Mammary epithelial cell (primary cell): ENCODE measurements at regions of chr3 and their contacts with region 1.

Region 1: DNA sequence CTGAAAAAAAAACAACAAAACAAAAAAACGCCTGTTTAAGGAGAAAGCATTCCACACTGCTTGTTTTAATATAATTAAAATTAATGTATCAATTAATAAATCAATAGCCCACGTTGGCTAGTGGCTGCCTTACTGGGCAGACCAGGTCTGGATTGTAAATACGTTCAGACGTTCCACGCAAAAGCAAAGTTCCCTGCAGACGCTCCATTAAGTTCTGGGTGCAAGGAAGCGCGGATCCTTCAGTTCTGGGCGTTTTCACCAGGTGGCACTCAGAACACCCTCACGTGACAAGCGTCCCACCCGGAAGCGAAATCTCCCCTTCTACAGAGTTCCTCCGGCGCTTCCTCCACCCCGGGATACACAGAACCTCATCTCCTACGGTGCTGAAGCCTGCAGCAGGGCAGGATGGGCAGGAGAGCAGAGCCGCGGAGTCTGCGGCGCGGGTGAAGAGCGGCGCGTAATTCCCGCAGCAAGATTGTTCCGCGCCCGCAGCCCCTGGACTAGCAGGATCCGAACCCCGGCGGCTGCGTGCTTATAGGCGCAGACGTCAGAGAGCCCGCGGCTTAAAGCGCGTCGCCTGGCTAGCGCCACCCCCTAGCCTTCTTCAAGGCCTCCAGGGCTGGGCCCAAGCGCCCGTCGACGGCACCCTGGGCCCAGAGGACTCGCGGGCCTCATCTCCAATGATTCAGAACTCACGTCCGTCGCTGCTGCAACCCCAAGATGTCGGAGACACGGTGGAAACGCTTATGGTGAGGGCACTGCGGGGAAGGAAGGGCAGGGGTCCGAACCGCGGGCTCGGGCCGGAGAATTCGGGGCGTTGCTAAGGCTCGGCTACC is at the start of gene SLC25A38:
- DNase-seq: peak; percentile 83
- H3K4me3 ChIP-seq: peak within 1 kb of the TSS; percentile 84 to 96 (median 87)
- H3K27ac ChIP-seq: peak within 1 kb of the TSS; percentile 88
- H3K4me1 ChIP-seq: peaks cover 13% of the 10 kb centered on the region
- H3K27me3 ChIP-seq: no peaks in the 10 kb centered on the region
- CTCF ChIP-seq: peak in 1 of 2 donors; percentile 39
- total RNA-seq, gene SLC25A38: 27.5 to 34.9 TPM

Region 2: GRCh38 chr3:39107388-39108199 is 275.7 kb before region 1 on chr3 and contains the starts of genes GORASP1 and TTC21A:
- CTCF ChIA-PET with region 1: interaction called, 3 read pairs
- dilution Hi-C with region 1: no loop called
- in situ Hi-C with region 1: no loop called
- intact Hi-C with region 1: loop called (anchors 5 kb)
- DNase-seq: peak; percentile 81
- H3K4me3 ChIP-seq: peak within 1 kb of the TSS; percentile 72 to 95 (median 91)
- H3K27ac ChIP-seq: peak within 1 kb of the TSS; percentile 86
- H3K4me1 ChIP-seq: peaks cover 27% of the 10 kb centered on the region
- H3K27me3 ChIP-seq: no peaks in the 10 kb centered on the region
- CTCF ChIP-seq: no peak
- total RNA-seq, gene GORASP1: 47.0 to 51.3 TPM
- total RNA-seq, gene TTC21A: 5.2 to 5.7 TPM

Region 3: DNA sequence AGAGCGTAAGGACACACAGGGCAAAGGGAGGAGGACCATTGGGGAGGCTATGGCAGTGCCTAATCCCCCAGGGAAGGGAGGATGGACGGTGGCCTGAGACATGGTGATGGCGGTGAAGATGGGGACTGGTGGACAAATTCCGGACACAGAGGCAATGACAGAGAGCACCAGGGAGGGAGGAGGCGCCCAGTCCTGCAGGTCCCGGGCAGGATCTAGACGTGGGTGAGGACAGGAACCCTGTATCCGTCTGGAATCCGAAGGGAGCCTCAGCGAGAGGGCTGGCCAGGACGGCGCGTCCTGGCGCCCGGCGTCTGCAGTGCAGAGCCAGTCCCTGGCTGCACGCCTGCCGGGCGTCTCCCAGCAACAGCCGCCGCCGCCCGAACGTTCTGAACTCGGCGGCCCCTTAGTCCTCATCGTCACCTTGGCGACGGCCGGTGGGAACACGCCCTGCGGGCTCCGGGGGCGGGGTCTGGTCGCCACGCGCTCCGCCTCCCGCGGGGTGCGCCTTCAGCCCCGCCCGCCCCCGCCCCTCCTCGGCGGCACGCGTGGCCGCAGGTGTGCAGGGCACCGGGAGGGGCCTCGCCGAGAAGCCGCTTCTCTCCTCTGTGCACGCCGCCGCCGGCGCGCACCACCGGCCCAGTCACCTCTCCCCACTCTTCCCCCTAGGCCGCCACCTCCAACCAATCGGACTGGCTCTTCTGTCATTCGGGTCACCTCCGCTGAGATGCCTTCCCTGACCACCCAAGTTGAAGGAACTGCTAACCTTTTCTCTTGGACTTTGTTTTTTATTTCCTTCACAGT is 202.5 kb before region 1 on chr3:
- CTCF ChIA-PET with region 1: no interaction called
- dilution Hi-C with region 1: no loop called
- in situ Hi-C with region 1: loop called in 1 of 2 experiments (anchors 25 kb)
- intact Hi-C with region 1: no loop called
- DNase-seq: peak; percentile 86
- H3K4me3 ChIP-seq: peak overlapping the region; percentile 6 to 36 (median 22)
- H3K27ac ChIP-seq: peak overlapping the region; percentile 58
- H3K4me1 ChIP-seq: peaks cover 36% of the 10 kb centered on the region
- H3K27me3 ChIP-seq: no peaks in the 10 kb centered on the region
- CTCF ChIP-seq: peak in 1 of 2 donors; percentile 37

Region 4: DNA sequence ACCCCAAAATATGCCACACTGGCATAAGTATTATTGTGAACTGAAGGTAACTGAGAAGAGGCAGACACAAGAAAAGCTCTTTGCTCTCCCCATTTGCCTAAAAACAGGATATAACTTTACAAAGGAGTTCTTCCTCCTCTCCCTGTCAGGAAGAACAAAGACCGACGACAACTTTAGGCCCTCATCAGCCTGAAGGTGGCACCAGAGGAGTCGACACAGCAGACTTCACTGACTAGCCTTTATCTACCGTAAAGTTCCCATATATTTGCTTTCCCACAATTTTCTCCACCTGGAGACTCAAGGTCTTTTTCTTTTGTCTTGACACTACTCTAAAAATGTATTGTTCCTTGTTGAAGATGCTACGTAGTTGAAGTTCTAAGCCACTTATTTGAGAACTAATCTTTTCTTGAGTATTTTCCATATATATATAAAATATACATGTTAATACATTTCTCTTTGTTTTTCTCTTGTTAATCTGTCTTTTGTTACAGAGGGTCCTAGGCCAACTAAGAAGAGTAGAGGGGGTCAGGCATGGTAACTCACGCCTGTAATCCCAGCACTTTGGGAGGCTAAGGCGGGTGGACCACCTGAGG is 174.7 kb before region 1 on chr3:
- CTCF ChIA-PET with region 1: no interaction called
- dilution Hi-C with region 1: no loop called
- in situ Hi-C with region 1: no loop called
- intact Hi-C with region 1: loop called (anchors 5 kb)
- DNase-seq: peak; percentile 50
- H3K4me3 ChIP-seq: no peak overlapping the region
- H3K27ac ChIP-seq: no peak overlapping the region
- H3K4me1 ChIP-seq: no peaks in the 10 kb centered on the region
- H3K27me3 ChIP-seq: peaks cover 3% of the 10 kb centered on the region
- CTCF ChIP-seq: peak; percentile 65 to 81

Region 5: DNA sequence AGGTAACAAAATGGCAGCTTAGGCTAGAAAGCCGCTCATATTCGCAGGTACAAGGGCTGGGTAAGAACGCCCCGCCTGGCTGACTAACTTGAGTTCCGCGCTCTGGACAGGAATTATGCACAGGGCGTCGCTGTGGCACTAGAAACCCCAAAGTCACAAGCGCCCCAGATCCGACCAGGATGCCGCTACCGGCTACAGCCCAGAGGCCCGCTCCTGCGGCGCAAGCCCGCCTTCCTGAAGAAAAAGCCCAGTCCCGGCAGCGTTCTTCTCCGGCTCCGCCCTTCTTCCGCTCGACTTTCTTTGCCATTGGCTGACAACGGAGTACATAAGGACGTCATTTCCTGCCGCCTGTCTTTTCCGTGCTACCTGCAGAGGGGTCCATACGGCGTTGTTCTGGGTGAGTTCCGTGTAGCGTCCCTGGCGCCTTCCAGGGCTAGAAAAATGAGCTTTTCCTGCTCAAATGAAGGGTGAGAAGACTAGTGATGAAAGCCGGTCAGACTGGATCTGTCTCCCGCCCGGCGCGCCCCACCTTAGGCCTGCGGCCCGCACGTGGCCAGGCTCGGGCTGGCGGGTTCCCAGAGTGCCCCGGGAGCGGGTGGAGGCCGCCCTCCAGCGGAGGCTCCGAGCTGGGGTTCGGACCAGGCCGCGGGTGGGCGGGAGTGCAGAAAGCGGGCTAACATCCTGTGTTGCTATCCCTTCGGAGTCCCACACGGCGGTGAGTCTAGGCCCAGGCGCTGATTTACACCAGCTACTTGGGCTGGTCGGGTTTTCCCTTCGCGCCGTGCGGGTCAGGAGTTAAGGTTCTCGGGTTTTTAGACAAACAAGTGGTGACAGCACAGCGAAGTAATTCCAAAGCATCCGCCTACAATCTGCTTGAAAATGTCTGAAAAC is 23.4 kb after region 1 on chr3 and contains the start of gene RPSA:
- CTCF ChIA-PET with region 1: no interaction called
- dilution Hi-C with region 1: no loop called
- in situ Hi-C with region 1: no loop called
- intact Hi-C with region 1: loop called (anchors 1 kb)
- DNase-seq: peak; percentile 98
- H3K4me3 ChIP-seq: peak within 1 kb of the TSS; percentile 58 to 95 (median 92)
- H3K27ac ChIP-seq: peak within 1 kb of the TSS; percentile 93
- H3K4me1 ChIP-seq: peaks cover 19% of the 10 kb centered on the region
- H3K27me3 ChIP-seq: no peaks in the 10 kb centered on the region
- CTCF ChIP-seq: peak; percentile 25 to 55
- total RNA-seq, gene RPSA: 874 to 1,396 TPM